B cell (primary cell): ENCODE measurements at regions of chr7 and their contacts with region 1.

Region 1: GRCh38 chr7:73451780-73452398 is 18.3 kb downstream of the FZD9 start:
- DNase-seq: peak; percentile 76
- ATAC-seq: peak; percentile 91
- H3K4me3 ChIP-seq: no peak overlapping the region
- H3K4me3 Mint-ChIP-seq: no peak overlapping the region
- H3K27ac ChIP-seq: no peak overlapping the region
- H3K27ac Mint-ChIP-seq: no peak overlapping the region
- H3K4me1 ChIP-seq: no peaks in the 10 kb centered on the region
- H3K4me1 Mint-ChIP-seq: peaks cover 1% of the 10 kb centered on the region
- H3K27me3 ChIP-seq: no peaks in the 10 kb centered on the region
- H3K27me3 Mint-ChIP-seq: no peaks in the 10 kb centered on the region
- CTCF ChIP-seq: peak; percentile 99

Region 2: DNA sequence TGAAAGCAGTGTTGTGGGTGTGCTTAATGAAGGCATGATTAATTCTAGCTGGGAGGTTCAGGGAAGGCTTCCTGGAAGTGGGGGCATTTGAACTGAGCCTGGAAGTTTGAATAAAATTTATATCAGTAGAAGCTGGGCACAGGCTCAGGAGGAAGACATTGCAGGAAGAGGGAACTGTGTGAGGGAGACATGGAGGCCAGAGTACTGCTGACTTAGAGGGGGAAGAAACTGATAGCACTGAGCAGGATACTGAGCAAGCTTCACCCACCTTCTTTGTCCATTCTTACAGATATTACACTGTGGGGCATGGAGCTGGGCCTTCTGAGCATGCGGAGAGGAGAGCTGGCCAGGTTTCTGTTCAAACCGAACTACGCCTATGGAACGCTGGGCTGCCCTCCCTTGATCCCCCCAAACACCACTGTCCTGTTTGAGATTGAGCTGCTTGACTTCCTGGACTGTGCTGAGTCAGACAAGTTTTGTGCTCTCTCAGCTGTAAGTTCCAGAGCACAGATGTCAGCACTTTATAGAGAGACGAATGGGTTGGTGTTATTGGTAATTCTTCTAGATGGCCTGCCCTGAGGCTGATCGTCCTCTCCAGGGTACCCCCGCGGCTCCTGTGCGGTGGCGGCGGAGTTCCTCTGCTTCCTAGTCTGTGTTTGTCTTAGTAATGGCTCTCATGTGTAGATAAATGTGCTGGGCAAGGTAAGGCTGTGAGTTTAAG is 121.9 kb before region 1 on chr7:
- CTCF ChIA-PET with region 1: interaction called, 3 read pairs
- POLR2A ChIA-PET with region 1: no interaction called
- intact Hi-C with region 1: loop called (anchors 2 kb)
- DNase-seq: no peak
- ATAC-seq: no peak
- H3K4me3 ChIP-seq: no peak overlapping the region
- H3K4me3 Mint-ChIP-seq: no peak overlapping the region
- H3K27ac ChIP-seq: no peak overlapping the region
- H3K27ac Mint-ChIP-seq: no peak overlapping the region
- H3K4me1 ChIP-seq: no peaks in the 10 kb centered on the region
- H3K4me1 Mint-ChIP-seq: no peaks in the 10 kb centered on the region
- H3K27me3 ChIP-seq: no peaks in the 10 kb centered on the region
- H3K27me3 Mint-ChIP-seq: peaks cover 4% of the 10 kb centered on the region
- CTCF ChIP-seq: no peak

Region 3: DNA sequence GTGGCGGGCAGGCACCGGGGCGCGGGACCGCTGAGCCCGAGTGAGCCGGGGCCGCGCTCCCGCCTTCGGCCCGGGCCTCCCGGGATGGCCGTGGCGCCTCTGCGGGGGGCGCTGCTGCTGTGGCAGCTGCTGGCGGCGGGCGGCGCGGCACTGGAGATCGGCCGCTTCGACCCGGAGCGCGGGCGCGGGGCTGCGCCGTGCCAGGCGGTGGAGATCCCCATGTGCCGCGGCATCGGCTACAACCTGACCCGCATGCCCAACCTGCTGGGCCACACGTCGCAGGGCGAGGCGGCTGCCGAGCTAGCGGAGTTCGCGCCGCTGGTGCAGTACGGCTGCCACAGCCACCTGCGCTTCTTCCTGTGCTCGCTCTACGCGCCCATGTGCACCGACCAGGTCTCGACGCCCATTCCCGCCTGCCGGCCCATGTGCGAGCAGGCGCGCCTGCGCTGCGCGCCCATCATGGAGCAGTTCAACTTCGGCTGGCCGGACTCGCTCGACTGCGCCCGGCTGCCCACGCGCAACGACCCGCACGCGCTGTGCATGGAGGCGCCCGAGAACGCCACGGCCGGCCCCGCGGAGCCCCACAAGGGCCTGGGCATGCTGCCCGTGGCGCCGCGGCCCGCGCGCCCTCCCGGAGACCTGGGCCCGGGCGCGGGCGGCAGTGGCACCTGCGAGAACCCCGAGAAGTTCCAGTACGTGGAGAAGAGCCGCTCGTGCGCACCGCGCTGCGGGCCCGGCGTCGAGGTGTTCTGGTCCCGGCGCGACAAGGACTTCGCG is 17.8 kb before region 1 on chr7:
- CTCF ChIA-PET with region 1: interaction called, 14 read pairs
- POLR2A ChIA-PET with region 1: no interaction called
- intact Hi-C with region 1: no loop called
- DNase-seq: no peak
- ATAC-seq: peak; percentile 46
- H3K4me3 ChIP-seq: peak overlapping the region in 4 of 5 experiments; percentile 17 to 53 (median 43)
- H3K4me3 Mint-ChIP-seq: peak overlapping the region; percentile 80
- H3K27ac ChIP-seq: no peak overlapping the region
- H3K27ac Mint-ChIP-seq: no peak overlapping the region
- H3K4me1 ChIP-seq: peaks cover 0 to 9% of the 10 kb centered on the region in 2 donors
- H3K4me1 Mint-ChIP-seq: peaks cover 8% of the 10 kb centered on the region
- H3K27me3 ChIP-seq: peaks cover 0 to 5% (median 0%) of the 10 kb centered on the region in 4 experiments
- H3K27me3 Mint-ChIP-seq: peaks cover 5% of the 10 kb centered on the region
- CTCF ChIP-seq: no peak